Endothelial cell of umbilical vein (primary cell): ENCODE measurements at regions of chr5 and their contacts with region 1.

Region 1: GRCh38 chr5:102755686-102756371 is 724 bp downstream of the PAM start:
- DNase-seq: peak; percentile 78
- H3K4me3 ChIP-seq: peak overlapping the region; percentile 73 to 90 (median 86)
- H3K27ac ChIP-seq: peak overlapping the region; percentile 81
- H3K4me1 ChIP-seq: peaks cover 15% of the 10 kb centered on the region
- H3K27me3 ChIP-seq: no peaks in the 10 kb centered on the region
- CTCF ChIP-seq: no peak
- POLR2A ChIP-seq: no peak

Region 2: GRCh38 chr5:103119765-103120606 is 364.2 kb after region 1 on chr5 and contains the starts of genes GIN1 and PPIP5K2:
- CTCF ChIA-PET with region 1: interaction called, 3 read pairs
- POLR2A ChIA-PET with region 1: no interaction called
- dilution Hi-C with region 1: no loop called
- intact Hi-C with region 1: loop called (anchors 1 kb)
- DNase-seq: peak; percentile 99
- H3K4me3 ChIP-seq: peak within 1 kb of the TSS; percentile 63 to 92 (median 92)
- H3K27ac ChIP-seq: peak within 1 kb of the TSS; percentile 93
- H3K4me1 ChIP-seq: peaks cover 19% of the 10 kb centered on the region
- H3K27me3 ChIP-seq: no peaks in the 10 kb centered on the region
- CTCF ChIP-seq: no peak
- POLR2A ChIP-seq: peak; percentile 50
- total RNA-seq, gene GIN1: 4.4 and 6.7 TPM in 2 replicates
- total RNA-seq, gene PPIP5K2: 53.5 and 69.4 TPM in 2 replicates

Region 3: GRCh38 chr5:103569313-103570060 is 813.7 kb after region 1 on chr5:
- CTCF ChIA-PET with region 1: no interaction called
- POLR2A ChIA-PET with region 1: no interaction called
- dilution Hi-C with region 1: no loop called
- intact Hi-C with region 1: no loop called
- DNase-seq: no peak
- H3K4me3 ChIP-seq: no peak overlapping the region
- H3K27ac ChIP-seq: no peak overlapping the region
- H3K4me1 ChIP-seq: no peaks in the 10 kb centered on the region
- H3K27me3 ChIP-seq: no peaks in the 10 kb centered on the region
- CTCF ChIP-seq: no peak
- POLR2A ChIP-seq: no peak